HEK293 (cell line): ENCODE measurements at regions of chr13 and their contacts with region 1.

Region 1: DNA sequence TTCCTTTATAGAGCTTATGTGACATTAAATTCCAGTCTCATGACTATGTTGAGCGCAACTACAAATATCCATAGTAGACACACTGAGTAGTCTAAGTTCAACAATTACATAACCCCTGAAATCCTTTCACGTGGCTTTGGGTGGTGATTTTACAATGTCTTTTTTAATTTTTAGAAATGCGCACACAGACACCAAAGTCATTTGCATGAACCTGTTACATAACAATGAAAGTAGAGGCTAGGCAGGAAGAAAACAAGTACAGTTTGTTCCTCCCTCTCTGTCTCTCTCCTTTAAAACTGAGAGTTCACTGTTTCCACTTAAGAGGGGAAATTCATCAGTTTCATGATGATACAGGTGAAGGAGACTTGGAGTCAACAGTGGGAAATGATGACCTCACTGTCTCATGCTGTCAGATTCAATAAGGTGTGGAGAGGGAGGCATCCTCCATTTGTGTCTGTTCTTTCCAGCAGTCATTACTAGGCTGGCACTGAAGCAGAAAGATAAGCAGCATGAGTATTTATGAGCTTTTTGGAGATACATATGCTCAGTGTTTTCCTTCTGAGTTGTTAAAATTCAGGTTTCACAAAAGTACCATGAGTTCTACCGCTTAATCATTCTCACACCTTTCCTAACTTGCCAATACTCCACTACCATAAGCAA is 201.8 kb downstream of the LHFPL6 start:
- H3K4me3 ChIP-seq: no peak overlapping the region
- H3K27ac ChIP-seq: no peak overlapping the region
- H3K4me1 ChIP-seq: peaks cover 9% of the 10 kb centered on the region; the same call in 1 of the 2 replicates
- CTCF ChIP-seq: no peak

Region 2: GRCh38 chr13:39047560-39047959 is 353.6 kb before region 1 on chr13:
- CTCF ChIA-PET with region 1: interaction called, 11 read pairs
- POLR2A ChIA-PET with region 1: no interaction called
- H3K4me3 ChIP-seq: no peak overlapping the region
- H3K27ac ChIP-seq: no peak overlapping the region
- H3K4me1 ChIP-seq: 0 out of 2 replicates have a peak, but pooled peaks cover 3% of the 10 kb centered on the region
- CTCF ChIP-seq: no peak

Region 3: DNA sequence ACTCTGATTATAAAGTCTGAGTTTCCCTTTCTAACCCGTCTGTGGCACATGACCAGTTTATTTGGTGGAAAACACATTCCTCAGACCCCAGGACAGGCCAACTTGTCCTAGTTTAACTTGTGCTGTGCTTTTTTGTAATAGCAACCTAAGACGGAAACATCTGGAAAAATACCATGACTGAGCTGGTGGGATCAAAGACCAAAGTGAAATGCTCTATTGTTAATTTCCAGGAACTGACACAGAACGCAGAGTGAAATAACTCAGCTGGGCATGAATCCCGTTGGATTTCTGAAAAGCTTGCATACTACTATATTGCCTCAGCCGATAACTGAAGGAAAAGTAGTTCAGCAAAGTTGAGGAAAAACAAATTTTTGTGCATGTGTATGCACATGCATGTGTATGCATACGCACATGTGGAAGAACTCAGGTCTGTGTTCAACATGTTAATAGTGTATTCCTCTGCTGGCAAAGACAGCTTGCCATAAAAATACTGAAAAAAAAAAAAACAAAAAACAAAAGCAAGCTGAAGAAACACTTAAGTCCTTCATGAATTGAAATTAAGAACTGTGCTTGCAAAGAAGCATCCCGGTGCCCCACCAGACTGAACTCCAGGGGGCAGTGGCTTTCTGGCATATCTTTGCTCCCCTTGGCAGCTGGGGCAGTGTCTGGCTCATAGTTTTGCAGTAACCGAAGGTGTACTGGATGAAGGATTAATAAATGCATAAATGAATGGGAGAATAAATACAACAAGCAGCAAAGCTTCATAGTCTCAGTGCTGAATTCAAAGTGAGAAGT is 14.0 kb after region 1 on chr13:
- CTCF ChIA-PET with region 1: interaction called, 11 read pairs
- POLR2A ChIA-PET with region 1: no interaction called
- H3K4me3 ChIP-seq: no peak overlapping the region
- H3K27ac ChIP-seq: no peak overlapping the region
- H3K4me1 ChIP-seq: no peaks in the 10 kb centered on the region
- CTCF ChIP-seq: no peak